ENCODE measurements at regions of chr17 and their contacts with region 1.

Region 1: DNA sequence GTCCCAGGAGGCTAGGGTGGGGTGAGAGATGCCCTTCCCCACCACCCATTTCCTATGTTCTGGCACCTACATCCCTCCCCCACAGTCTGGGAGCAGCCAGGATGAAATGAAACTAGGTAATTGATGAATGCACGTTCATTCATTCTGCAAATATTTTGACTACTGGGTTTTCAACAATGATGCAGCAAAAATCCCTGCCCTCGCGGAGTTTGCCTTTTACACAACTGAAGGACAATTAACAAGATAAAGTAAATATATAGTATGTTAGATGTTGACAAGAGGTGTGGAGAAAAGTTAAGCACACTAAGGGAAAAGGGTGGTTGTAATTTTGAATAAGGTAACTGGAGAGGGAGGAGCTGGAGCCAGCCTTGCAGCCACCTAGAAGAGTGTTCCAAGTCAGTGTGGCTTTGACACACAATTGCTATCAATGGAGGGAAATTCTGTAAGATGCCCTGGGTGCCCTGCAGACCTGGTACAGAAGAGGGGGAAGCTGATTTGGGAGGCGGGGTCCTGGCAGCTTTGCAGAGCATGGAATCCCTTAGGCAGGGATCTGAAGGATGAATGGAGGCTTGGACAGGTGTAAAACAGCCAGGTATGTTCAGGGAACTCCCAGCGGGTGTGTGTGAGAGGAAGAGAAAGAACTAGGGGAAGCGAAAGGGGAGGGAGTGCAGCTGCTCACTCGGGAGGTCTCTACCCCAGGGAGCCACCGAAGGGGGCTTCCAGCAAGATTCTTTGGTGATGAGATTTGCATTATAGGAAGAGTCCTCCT is 2.5 kb downstream of the TMEM92 start:
- DNase-seq: peak; percentile 55
- ATAC-seq: no peak
- H3K4me3 ChIP-seq: peak overlapping the region; percentile 48
- H3K27ac ChIP-seq: peak overlapping the region; percentile 63
- H3K4me1 ChIP-seq: peaks cover 65% of the 10 kb centered on the region
- H3K27me3 ChIP-seq: no peaks in the 10 kb centered on the region
- CTCF ChIP-seq: no peak

Region 2: GRCh38 chr17:50101346-50102163 is 175.2 kb before region 1 on chr17:
- CTCF ChIA-PET with region 1: no interaction called
- POLR2A ChIA-PET with region 1: no interaction called
- intact Hi-C with region 1: no loop called
- DNase-seq: no peak
- ATAC-seq: peak; percentile 28
- H3K4me3 ChIP-seq: no peak overlapping the region
- H3K27ac ChIP-seq: no peak overlapping the region
- H3K4me1 ChIP-seq: 0 out of 2 replicates have a peak, but pooled peaks cover 5% of the 10 kb centered on the region
- H3K27me3 ChIP-seq: no peaks in the 10 kb centered on the region
- CTCF ChIP-seq: no peak

Region 3: DNA sequence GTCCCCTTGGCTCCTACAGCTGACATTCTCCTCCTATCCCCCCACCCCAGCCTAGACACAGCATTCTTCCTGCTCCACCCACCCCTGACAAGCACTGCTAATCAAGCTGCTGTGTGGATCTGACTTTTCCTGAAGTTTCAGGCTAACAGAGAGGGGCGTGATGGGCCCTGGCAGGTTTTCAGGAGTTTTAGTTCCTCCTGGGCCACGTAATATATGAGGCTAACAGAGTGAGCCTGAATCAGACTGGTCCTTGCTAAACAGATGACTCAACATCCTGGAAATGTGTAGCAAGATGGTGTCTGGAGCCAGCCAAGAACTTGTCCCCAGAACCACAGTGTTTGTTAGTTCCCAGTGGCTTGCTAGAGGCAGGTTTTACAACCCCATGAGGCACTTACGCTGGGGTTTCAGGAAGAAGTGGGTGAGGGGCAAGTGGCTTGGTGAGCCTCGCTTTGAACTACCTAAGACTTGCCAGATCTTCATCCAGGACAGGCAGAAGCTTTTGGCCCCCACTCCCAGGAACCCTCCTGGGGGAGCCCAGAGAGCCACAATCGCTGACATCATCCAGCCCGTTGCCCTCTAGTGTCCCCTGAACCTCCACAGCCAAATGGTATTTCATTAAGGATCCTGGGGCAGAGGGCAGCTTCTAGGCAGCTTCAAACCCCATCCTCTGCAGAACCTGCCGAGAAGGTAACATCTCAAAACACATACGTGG is 13.4 kb after region 1 on chr17:
- CTCF ChIA-PET with region 1: interaction called, 7 read pairs
- POLR2A ChIA-PET with region 1: no interaction called
- intact Hi-C with region 1: loop called (anchors 2 kb)
- DNase-seq: peak; percentile 98
- ATAC-seq: peak; percentile 94
- H3K4me3 ChIP-seq: peak overlapping the region; percentile 50
- H3K27ac ChIP-seq: peak overlapping the region; percentile 92
- H3K4me1 ChIP-seq: peaks cover 35% of the 10 kb centered on the region
- H3K27me3 ChIP-seq: no peaks in the 10 kb centered on the region
- CTCF ChIP-seq: no peak

Region 4: GRCh38 chr17:50331085-50331791 is 54.5 kb after region 1 on chr17:
- CTCF ChIA-PET with region 1: no interaction called
- POLR2A ChIA-PET with region 1: no interaction called
- intact Hi-C with region 1: no loop called
- DNase-seq: peak; percentile 97
- ATAC-seq: peak; percentile 97
- H3K4me3 ChIP-seq: no peak overlapping the region
- H3K27ac ChIP-seq: peak overlapping the region; percentile 23
- H3K4me1 ChIP-seq: peaks cover 12% of the 10 kb centered on the region
- H3K27me3 ChIP-seq: no peaks in the 10 kb centered on the region
- CTCF ChIP-seq: no peak